ENCODE measurements at regions of chr13 and their contacts with region 1.

Region 1: DNA sequence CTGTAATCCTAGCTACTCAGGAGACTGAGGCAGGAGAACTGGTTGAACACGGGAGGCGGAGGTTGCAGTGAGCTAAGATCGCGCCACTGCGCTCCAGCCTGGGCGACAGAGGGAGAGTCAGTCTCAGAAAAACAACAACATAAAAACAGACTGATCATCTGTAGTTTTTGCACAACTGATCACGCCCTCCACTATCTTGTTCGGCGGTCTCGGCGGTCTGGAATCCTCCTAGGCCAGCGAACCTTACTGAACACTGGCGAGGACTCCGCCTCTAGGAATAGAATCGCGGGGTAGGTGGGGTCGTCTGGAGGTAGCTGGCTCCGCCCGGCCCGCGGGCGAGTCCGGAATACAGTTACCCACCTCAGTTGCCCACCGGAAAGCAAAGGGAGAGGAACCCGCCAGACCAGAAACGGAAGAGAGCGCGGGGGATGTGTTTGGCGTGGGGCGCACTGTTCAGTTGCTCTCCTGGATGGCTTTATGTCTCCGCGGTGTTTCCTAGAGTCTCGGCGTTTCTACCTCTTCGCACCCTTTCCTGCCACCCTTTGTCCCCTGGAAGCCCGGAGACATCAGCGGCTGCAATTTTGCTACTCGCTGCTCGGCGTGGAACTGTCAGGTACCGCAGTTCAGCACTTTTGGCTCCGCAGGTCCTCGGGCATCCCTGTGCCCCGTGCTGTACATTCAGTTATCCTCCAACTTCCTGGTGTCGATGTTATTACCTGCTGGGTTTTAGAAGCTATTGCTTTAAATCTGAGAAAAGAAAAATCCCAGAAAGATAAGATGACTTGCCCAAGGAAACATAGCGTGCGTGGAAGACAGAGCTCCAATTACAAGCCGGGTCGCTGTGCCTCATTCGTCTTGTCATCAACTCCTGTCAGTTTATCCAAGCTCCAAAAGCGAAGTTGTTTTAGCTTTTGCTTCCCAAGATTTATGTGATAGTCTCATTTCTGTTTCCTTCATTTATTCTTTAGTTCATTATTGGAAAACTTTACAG is 24.9 kb upstream of the HNRNPA1L2 start:
- DNase-seq: peak; percentile 88
- ATAC-seq: peak; percentile 95
- H3K4me3 ChIP-seq: peak overlapping the region; percentile 65 to 96 (median 93)
- H3K4me3 Mint-ChIP-seq: peak overlapping the region; percentile 98
- H3K27ac ChIP-seq: peak overlapping the region; percentile 54 to 77
- H3K27ac Mint-ChIP-seq: peak overlapping the region; percentile 97
- H3K4me1 ChIP-seq: peaks cover 12 to 16% of the 10 kb centered on the region in 2 donors
- H3K4me1 Mint-ChIP-seq: peaks cover 41% of the 10 kb centered on the region
- H3K27me3 ChIP-seq: no peaks in the 10 kb centered on the region
- H3K27me3 Mint-ChIP-seq: peaks cover under 1% of the 10 kb centered on the region
- CTCF ChIP-seq: no peak

Region 2: GRCh38 chr13:52599848-52600603 is 17.3 kb before region 1 on chr13:
- CTCF ChIA-PET with region 1: interaction called, 11 read pairs
- POLR2A ChIA-PET with region 1: no interaction called
- intact Hi-C with region 1: no loop called
- DNase-seq: peak; percentile 22
- ATAC-seq: peak; percentile 49
- H3K4me3 ChIP-seq: peak overlapping the region in 4 of 5 experiments; percentile 17 to 56 (median 31)
- H3K4me3 Mint-ChIP-seq: peak overlapping the region; percentile 85
- H3K27ac ChIP-seq: no peak overlapping the region
- H3K27ac Mint-ChIP-seq: no peak overlapping the region
- H3K4me1 ChIP-seq: peaks cover 8 to 11% of the 10 kb centered on the region in 2 donors
- H3K4me1 Mint-ChIP-seq: peaks cover 8% of the 10 kb centered on the region
- H3K27me3 ChIP-seq: peaks cover 0 to 27% (median 12%) of the 10 kb centered on the region in 4 experiments
- H3K27me3 Mint-ChIP-seq: peaks cover 43% of the 10 kb centered on the region
- CTCF ChIP-seq: no peak